Calu3 (cell line): ENCODE measurements at regions of chr11 and their contacts with region 1.

Region 1: DNA sequence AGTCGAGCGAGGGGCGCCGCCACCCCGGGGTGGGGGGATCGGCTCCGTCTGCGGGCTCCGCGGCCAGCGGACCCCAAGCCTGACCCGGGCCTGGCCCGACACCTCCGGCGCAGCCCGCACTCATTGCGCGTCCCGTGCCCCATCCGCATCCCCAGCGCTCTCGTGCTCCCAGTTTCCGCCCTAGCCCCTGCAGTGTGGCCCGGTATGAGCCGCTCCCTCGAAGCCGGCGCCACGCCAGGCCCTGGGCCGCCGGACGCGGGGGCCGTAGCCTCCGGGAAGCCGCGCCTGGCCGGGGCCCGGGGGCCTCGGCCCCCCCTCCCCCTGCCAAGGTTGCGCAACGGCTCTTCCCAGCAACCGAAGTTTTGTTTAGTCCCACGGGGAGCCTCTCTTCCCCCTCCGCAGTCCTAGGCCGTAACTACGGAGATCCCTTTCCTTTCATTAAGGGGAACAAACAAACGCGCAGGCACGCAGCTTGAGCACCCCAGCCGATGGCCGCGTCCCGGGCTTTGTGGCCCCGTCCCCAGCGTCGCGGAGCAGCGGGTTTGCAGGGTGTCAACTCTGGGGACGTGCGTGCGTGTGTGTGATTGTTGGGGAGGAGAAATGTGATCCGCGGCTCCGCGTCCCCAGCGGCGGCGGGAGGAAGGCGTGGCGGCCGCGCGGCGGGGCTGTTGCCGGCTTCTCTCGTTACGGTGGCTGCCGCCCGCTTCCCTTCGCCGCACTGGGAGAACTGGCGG is 883 bp downstream of the HIPK3 start:
- DNase-seq: peak; percentile 79
- H3K4me3 Mint-ChIP-seq: peak overlapping the region; percentile 99
- H3K27ac Mint-ChIP-seq: peak overlapping the region; percentile 97
- H3K4me1 Mint-ChIP-seq: peaks cover 39% of the 10 kb centered on the region
- H3K27me3 Mint-ChIP-seq: no peaks in the 10 kb centered on the region
- CTCF ChIP-seq: no peak

Region 2: GRCh38 chr11:33168709-33169200 is 89.3 kb before region 1 on chr11:
- CTCF ChIA-PET with region 1: no interaction called
- intact Hi-C with region 1: loop called (anchors 5 kb)
- DNase-seq: no peak
- H3K4me3 Mint-ChIP-seq: no peak overlapping the region
- H3K27ac Mint-ChIP-seq: no peak overlapping the region
- H3K4me1 Mint-ChIP-seq: peaks cover 6% of the 10 kb centered on the region
- H3K27me3 Mint-ChIP-seq: no peaks in the 10 kb centered on the region
- CTCF ChIP-seq: no peak

Region 3: GRCh38 chr11:33242575-33242974 is 15.5 kb before region 1 on chr11:
- CTCF ChIA-PET with region 1: no interaction called
- intact Hi-C with region 1: no loop called
- DNase-seq: no peak
- H3K4me3 Mint-ChIP-seq: no peak overlapping the region
- H3K27ac Mint-ChIP-seq: no peak overlapping the region
- H3K4me1 Mint-ChIP-seq: peaks cover 9% of the 10 kb centered on the region
- H3K27me3 Mint-ChIP-seq: no peaks in the 10 kb centered on the region
- CTCF ChIP-seq: no peak

Region 4: GRCh38 chr11:33329705-33330329 is 71.8 kb after region 1 on chr11:
- CTCF ChIA-PET with region 1: no interaction called
- intact Hi-C with region 1: loop called (anchors 5 kb)
- DNase-seq: peak; percentile 56
- H3K4me3 Mint-ChIP-seq: no peak overlapping the region
- H3K27ac Mint-ChIP-seq: no peak overlapping the region
- H3K4me1 Mint-ChIP-seq: no peaks in the 10 kb centered on the region
- H3K27me3 Mint-ChIP-seq: no peaks in the 10 kb centered on the region
- CTCF ChIP-seq: peak; percentile 61

Region 5: DNA sequence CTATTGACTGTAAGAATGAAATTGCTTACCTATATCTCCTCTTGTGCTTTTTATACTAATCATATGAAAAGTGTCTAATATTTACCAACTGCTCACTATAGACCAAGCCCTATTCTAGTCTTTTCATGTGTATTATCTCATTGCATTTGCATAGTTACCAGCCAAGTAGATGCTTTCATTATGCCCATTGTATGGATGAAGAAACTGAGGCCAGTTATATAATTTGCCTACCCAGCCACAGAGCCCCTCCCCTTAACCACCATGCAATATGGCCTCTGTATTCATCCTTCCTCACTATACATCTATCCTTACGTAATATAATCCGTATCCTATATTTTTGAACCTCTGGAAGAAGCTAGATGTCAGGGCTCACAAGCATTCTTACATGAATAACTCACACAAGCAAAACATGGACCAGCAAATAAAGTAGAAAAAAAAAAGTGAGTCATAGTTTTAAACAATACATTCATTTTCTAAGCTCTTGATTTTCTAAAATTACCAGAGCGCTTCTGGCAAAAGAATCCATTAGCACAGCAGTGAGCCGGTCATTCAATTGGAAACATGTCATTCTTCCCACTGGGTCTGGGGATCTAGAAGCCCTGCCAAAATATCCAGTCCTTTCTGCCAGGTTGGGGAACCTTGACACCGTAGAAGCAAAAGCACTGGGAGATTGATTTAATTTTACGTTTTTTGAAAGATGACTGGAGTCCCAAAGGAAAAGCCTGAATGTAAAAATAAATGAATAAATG is 362.5 kb after region 1 on chr11:
- CTCF ChIA-PET with region 1: no interaction called
- intact Hi-C with region 1: no loop called
- DNase-seq: no peak
- H3K4me3 Mint-ChIP-seq: no peak overlapping the region
- H3K27ac Mint-ChIP-seq: no peak overlapping the region
- H3K4me1 Mint-ChIP-seq: no peaks in the 10 kb centered on the region
- H3K27me3 Mint-ChIP-seq: no peaks in the 10 kb centered on the region
- CTCF ChIP-seq: no peak